ENCODE measurements at regions of chr3 and their contacts with region 1.

Region 1: DNA sequence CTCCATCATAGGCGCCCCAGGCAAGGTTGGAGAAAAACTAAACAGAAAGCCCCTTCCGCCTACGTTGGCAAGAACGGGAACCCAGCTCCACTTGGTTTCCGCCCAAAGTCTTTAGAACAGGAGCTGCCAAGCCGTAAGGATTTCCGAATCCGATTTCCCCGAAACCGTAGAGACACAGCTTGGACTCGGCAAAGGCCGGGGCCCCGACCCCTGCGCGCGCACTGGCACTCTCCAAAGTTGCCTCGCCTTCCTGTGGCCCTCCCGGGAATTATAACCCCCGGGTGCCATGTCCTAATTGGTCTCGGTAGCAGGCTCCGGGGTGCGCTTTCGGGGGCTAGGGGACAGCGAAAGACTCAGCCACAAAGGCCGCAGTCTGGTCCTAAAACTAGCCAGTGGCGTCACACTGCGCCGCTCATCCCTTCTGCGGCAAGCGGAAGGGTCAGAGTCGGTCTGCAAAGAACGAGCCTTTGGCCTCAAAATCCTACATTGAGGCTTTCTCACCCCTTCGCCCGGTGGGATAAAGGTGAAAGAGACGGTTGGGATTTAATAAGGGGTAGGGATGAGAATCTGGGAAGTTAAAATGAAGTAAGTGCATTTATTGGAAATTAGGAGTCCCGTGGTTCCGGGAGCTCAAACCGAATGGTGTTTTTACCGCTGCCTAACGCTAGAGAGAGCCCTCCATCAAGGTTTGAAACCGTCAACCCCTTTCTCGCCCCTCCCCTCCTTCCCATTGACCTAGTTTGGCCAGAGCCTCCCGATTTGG is 6.8 kb downstream of the BCL6 start:
- DNase-seq: peak; percentile 33
- ATAC-seq: peak; percentile 41
- H3K4me3 Mint-ChIP-seq: peak overlapping the region; percentile 98
- H3K27ac Mint-ChIP-seq: peak overlapping the region; percentile 81
- H3K4me1 Mint-ChIP-seq: peaks cover 61% of the 10 kb centered on the region
- H3K27me3 Mint-ChIP-seq: no peaks in the 10 kb centered on the region
- CTCF ChIP-seq: no peak

Region 2: GRCh38 chr3:187811585-187812250 is 73.2 kb after region 1 on chr3:
- CTCF ChIA-PET with region 1: no interaction called
- POLR2A ChIA-PET with region 1: no interaction called
- intact Hi-C with region 1: no loop called
- DNase-seq: no peak
- ATAC-seq: no peak
- H3K4me3 Mint-ChIP-seq: no peak overlapping the region
- H3K27ac Mint-ChIP-seq: no peak overlapping the region
- H3K4me1 Mint-ChIP-seq: peaks cover 6% of the 10 kb centered on the region
- H3K27me3 Mint-ChIP-seq: no peaks in the 10 kb centered on the region
- CTCF ChIP-seq: no peak

Region 3: DNA sequence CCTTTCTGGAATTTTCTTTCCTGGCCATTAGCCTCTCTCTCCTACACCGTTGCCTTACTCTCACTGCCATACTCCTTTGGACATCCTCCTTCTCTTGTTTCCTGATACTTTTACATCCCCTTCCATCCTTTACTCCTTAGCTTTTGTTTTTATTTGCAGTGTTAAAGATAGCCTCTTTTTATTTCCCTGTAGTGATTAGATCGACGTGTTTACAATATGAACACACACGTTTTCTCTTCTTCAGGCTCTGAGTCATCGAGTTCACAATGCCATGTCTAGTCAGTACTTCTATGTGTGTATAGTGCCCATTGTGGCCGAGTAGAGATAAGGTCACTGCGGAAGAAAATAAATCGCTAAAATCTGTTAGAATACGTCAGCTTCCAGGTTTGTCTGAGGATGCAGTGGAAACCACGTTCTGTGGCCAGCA is 623.9 kb after region 1 on chr3:
- CTCF ChIA-PET with region 1: interaction called, 15 read pairs
- POLR2A ChIA-PET with region 1: interaction called, 51 read pairs
- intact Hi-C with region 1: loop called (anchors 1 kb)
- DNase-seq: no peak
- ATAC-seq: peak; percentile 63
- H3K4me3 Mint-ChIP-seq: peak overlapping the region; percentile 24
- H3K27ac Mint-ChIP-seq: peak overlapping the region; percentile 80
- H3K4me1 Mint-ChIP-seq: peaks cover 78% of the 10 kb centered on the region
- H3K27me3 Mint-ChIP-seq: no peaks in the 10 kb centered on the region
- CTCF ChIP-seq: no peak

Region 4: DNA sequence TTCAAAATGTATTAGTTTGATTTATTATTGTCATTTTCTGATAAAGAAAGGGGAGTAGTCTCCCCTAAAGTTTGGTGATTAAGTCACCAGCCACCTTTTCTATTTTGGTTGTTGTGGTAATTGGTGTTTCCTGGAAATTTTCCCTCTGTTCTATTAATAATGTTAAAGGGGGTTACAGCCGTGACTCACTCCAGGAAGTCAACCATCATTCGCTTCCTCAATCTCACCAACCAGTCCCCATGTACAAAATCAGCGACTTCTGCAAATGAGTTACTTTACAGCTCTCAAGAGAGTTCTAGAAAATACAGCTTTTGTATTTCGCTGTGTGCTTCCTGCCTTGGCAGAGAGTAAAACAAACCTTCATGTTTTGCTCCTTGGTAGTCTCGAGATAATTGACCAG is 700.6 kb after region 1 on chr3:
- CTCF ChIA-PET with region 1: interaction called, 8 read pairs
- POLR2A ChIA-PET with region 1: interaction called, 23 read pairs
- intact Hi-C with region 1: loop called (anchors 2 kb)
- DNase-seq: no peak
- ATAC-seq: peak; percentile 85
- H3K4me3 Mint-ChIP-seq: peak overlapping the region; percentile 52
- H3K27ac Mint-ChIP-seq: peak overlapping the region; percentile 88
- H3K4me1 Mint-ChIP-seq: peaks cover 95% of the 10 kb centered on the region
- H3K27me3 Mint-ChIP-seq: no peaks in the 10 kb centered on the region
- CTCF ChIP-seq: no peak

Region 5: DNA sequence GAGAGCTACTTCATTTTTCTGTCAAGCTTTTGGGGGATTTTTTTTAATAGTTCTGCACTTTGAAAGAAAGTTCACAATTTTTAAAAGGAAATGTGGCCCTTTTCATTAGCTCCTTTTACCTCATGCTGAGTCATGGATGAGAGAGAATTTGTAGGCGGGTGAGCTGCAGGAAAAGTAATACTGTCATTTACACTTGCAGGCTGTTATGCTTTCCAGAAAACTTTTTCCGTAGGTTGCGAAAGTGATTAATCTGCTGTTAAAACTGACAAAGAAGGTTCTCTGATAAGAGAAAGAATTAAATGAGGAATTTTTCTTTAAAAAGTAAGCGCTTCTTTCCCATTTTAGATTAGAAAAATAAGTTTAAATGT is 845.6 kb after region 1 on chr3:
- CTCF ChIA-PET with region 1: interaction called, 45 read pairs
- POLR2A ChIA-PET with region 1: interaction called, 24 read pairs
- intact Hi-C with region 1: loop called (anchors 1 kb)
- DNase-seq: no peak
- ATAC-seq: peak; percentile 8
- H3K4me3 Mint-ChIP-seq: no peak overlapping the region
- H3K27ac Mint-ChIP-seq: no peak overlapping the region
- H3K4me1 Mint-ChIP-seq: peaks cover 31% of the 10 kb centered on the region
- H3K27me3 Mint-ChIP-seq: no peaks in the 10 kb centered on the region
- CTCF ChIP-seq: no peak

Region 6: DNA sequence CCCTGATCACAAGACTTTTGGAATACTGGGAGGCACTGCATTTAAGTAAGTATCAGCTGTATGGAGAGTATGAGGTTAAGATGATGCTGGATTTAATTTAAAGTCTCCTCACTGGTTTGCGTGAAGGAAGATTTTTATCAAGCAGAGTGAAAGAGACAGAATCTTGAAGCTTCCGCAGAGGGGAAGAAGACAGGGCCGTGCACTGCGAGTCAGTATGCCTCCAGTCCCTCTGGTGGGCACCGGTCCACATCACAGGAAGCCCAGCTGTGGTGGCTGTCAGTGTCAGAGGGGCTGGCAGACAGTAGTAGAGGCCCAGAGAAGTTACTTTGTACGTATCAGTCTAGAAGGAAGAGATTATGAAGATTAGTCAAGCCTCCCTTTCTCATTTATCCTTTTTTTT is 1054.3 kb after region 1 on chr3:
- CTCF ChIA-PET with region 1: interaction called, 7 read pairs
- POLR2A ChIA-PET with region 1: interaction called, 4 read pairs
- intact Hi-C with region 1: loop called (anchors 1 kb)
- DNase-seq: no peak
- ATAC-seq: peak; percentile 70
- H3K4me3 Mint-ChIP-seq: no peak overlapping the region
- H3K27ac Mint-ChIP-seq: no peak overlapping the region
- H3K4me1 Mint-ChIP-seq: peaks cover 16% of the 10 kb centered on the region
- H3K27me3 Mint-ChIP-seq: no peaks in the 10 kb centered on the region
- CTCF ChIP-seq: no peak

Region 7: DNA sequence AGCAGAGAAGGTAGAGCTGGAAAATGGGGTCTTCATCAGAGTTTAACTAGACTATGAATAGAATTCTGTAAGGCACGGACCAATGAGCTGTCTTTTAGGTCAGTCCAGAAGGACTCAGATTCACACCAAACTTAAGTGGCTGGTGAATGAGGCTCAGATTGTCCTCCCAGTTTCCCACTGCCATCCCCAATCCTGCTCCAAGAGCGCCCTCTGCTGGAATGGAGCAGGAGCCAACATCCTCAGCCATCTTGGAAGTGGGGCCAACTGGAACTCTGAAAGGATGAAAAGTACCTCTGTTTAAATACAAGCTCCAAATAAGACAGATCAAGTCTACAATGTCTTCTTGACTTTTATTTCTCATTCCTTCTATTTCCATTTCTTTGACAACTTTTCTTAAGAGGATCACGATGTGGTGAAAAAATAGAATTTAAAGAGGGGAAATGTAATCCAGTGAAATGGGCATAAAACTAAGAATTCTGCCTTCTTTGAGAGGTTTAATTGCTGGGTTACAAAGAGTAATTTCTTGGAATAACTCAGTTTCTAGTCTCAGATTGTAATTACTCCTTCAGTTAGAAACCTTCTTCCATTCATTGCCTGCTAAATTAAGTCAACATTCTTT is 1216.2 kb after region 1 on chr3:
- CTCF ChIA-PET with region 1: interaction called, 545 read pairs
- POLR2A ChIA-PET with region 1: interaction called, 137 read pairs
- intact Hi-C with region 1: loop called (anchors 1 kb)
- DNase-seq: peak; percentile 60
- ATAC-seq: peak; percentile 66
- H3K4me3 Mint-ChIP-seq: no peak overlapping the region
- H3K27ac Mint-ChIP-seq: no peak overlapping the region
- H3K4me1 Mint-ChIP-seq: peaks cover 25% of the 10 kb centered on the region
- H3K27me3 Mint-ChIP-seq: peaks cover 1% of the 10 kb centered on the region
- CTCF ChIP-seq: no peak

Measured in activated B cell treated with CpG ODN at 0.5 μM for 24 hours (primary cell).